ENCODE measurements at regions of chr6 and their contacts with region 1.

Region 1: GRCh38 chr6:37980222-37980595 is 160.7 kb downstream of the ZFAND3 start:
- DNase-seq: no peak
- ATAC-seq: no peak
- H3K4me3 ChIP-seq: no peak overlapping the region
- H3K4me3 Mint-ChIP-seq: no peak overlapping the region
- H3K27ac ChIP-seq: no peak overlapping the region
- H3K27ac Mint-ChIP-seq: peak overlapping the region; percentile 21 to 53
- H3K4me1 ChIP-seq: peaks cover 3% of the 10 kb centered on the region
- H3K4me1 Mint-ChIP-seq: peaks cover 60 to 66% of the 10 kb centered on the region in 2 donors
- H3K27me3 ChIP-seq: no peaks in the 10 kb centered on the region
- H3K27me3 Mint-ChIP-seq: no peaks in the 10 kb centered on the region
- CTCF ChIP-seq: no peak

Region 2: DNA sequence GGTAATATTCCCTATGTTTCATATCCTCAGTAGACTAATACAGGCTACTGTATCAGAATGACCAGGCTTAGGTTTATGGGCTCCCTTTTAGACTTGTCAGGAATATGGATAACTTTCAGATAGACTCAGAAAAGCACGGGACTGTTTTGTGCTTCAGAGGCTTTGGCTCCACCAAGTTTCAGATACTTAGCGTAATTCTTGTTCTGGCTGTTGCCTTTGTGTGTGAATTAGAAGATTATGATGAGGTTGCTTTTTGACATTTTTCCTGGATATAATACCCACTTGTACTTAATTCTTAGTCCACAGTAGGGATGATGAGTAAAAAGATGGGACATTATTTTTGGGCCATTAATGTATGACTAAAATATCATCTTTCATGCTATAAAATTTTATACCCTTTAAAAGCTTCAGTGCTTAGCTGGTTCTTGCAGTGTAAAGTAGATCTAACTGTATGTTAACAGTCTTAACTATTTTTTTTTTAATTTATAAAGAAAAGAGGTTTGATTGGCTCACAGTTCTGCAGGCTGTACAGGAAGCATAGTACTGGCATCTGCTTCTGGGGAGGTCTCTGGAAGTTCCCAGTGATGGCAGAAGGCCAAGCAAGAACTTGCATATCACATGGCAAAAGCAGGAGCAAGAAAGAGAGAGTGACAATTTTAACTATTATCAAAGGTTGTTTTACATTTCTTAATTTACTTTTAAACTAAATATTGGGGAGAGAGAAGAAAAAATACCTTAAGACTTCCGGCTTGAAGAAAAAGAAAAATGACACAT is 39.9 kb before region 1 on chr6:
- intact Hi-C with region 1: loop called (anchors 5 kb)
- DNase-seq: no peak
- ATAC-seq: peak in 1 of 3 donors; percentile 36
- H3K4me3 ChIP-seq: no peak overlapping the region
- H3K4me3 Mint-ChIP-seq: no peak overlapping the region
- H3K27ac ChIP-seq: no peak overlapping the region
- H3K27ac Mint-ChIP-seq: no peak overlapping the region
- H3K4me1 ChIP-seq: peaks cover 5% of the 10 kb centered on the region
- H3K4me1 Mint-ChIP-seq: peaks cover 68 to 70% of the 10 kb centered on the region in 2 donors
- H3K27me3 ChIP-seq: no peaks in the 10 kb centered on the region
- H3K27me3 Mint-ChIP-seq: no peaks in the 10 kb centered on the region
- CTCF ChIP-seq: no peak

Measured in natural killer cell (primary cell).